Aorta (tissue), 5 donors: ENCODE measurements at regions of chr4 and their contacts with region 1.

Region 1: DNA sequence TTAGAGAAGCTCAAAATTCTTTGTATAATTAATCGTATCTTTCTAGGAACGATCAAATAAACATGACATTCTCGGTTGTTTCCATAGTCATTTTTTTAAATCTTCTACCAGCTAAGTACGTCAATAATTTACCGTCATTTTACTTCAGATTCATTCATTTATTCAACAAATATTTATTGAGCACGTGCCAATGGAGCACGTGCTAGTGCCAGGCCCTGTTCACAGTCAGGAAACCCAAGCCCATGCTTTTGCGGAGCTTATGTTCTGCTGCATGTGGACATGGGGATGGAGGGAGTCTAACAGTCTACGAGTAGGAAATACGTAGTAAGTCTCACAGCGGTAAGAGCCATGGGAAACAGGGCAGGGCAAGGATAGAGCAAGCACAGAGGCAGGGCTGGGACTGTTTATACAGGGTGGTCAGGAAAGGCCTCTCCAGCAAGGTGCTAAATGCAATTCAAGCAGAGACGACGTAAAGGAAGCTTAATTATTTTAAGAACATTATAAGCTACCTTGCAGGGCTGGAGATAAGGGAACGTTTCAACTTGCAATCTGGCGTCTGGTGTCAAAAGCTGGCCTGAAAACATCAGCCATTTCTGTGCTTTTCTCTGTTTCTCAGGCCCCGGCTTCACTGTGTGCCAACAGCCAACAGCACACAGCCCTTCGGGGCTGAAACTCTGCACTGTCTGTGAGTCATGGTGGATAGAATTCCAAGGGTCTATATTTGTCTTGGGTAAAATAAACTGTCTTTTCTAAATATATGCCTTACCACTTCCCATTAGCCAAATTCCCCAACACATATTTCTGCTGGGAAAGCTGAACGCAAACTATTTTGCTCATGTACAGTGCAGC is 517.1 kb upstream of the ZFP42 start:
- DNase-seq: peak in 1 of 2 donors; percentile 76
- ATAC-seq: peak; percentile 87
- H3K4me3 ChIP-seq: no peak overlapping the region
- H3K27ac ChIP-seq: peak overlapping the region; percentile 87 to 98
- H3K4me1 ChIP-seq: peaks cover 5 to 21% of the 10 kb centered on the region in 2 donors
- H3K27me3 ChIP-seq: no peaks in the 10 kb centered on the region

Region 2: DNA sequence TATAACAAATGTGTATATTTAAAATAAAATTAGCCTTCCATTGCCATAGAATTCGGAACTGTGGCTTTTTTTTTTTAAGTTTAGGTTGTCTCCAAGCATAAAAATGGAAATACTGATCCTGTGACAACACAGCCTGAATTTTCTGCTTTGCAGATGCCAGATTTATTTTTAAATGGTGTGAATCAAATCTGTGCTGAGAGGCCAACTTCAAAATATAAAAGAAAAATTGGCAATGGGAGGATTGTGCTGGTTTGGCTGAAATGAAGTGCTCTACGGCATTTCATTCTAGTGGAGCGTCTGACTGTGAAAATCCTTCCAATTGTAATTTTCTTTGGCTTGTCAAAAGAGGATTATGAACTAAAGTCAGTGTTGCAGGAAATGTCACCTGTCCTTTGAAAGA is 63.3 kb before region 1 on chr4:
- intact Hi-C with region 1: loop called in 1 of 2 experiments (anchors 2 kb)
- DNase-seq: no peak
- ATAC-seq: no peak
- H3K4me3 ChIP-seq: no peak overlapping the region
- H3K27ac ChIP-seq: no peak overlapping the region
- H3K4me1 ChIP-seq: no peaks in the 10 kb centered on the region
- H3K27me3 ChIP-seq: no peaks in the 10 kb centered on the region